Transverse colon (tissue), 4 donors: ENCODE measurements at regions of chr17 and their contacts with region 1.

Region 1: GRCh38 chr17:19507775-19508576 is 25.7 kb upstream of the SLC47A1 start:
- DNase-seq: peak; percentile 91
- H3K4me3 ChIP-seq: peak overlapping the region; percentile 61 to 83 (median 65)
- H3K27ac ChIP-seq: peak overlapping the region; percentile 88 to 96 (median 92)
- H3K4me1 ChIP-seq: peaks cover 0 to 8% (median 5%) of the 10 kb centered on the region in 4 donors
- H3K27me3 ChIP-seq: no peaks in the 10 kb centered on the region
- CTCF ChIP-seq: no peak
- EP300 ChIP-seq: no peak
- POLR2A ChIP-seq: peak; percentile 49

Region 2: GRCh38 chr17:19362277-19363113 is 145.5 kb before region 1 on chr17 and contains the start of gene B9D1:
- in situ Hi-C with region 1: no loop called
- intact Hi-C with region 1: loop called (anchors 10 kb)
- DNase-seq: peak; percentile 96
- H3K4me3 ChIP-seq: peak within 1 kb of the TSS; percentile 61 to 78 (median 69)
- H3K27ac ChIP-seq: peak within 1 kb of the TSS; percentile 71 to 88 (median 85)
- H3K4me1 ChIP-seq: peaks cover 8 to 14% (median 12%) of the 10 kb centered on the region in 4 donors
- H3K27me3 ChIP-seq: no peaks in the 10 kb centered on the region
- CTCF ChIP-seq: peak; percentile 95 to 100 (median 98)
- EP300 ChIP-seq: no peak
- POLR2A ChIP-seq: no peak
- total RNA-seq, gene B9D1: 6.0 to 17.6 (median 9.5) TPM